Pancreas (tissue), 10 donors: ENCODE measurements at regions of chr11 and their contacts with region 1.

Region 1: DNA sequence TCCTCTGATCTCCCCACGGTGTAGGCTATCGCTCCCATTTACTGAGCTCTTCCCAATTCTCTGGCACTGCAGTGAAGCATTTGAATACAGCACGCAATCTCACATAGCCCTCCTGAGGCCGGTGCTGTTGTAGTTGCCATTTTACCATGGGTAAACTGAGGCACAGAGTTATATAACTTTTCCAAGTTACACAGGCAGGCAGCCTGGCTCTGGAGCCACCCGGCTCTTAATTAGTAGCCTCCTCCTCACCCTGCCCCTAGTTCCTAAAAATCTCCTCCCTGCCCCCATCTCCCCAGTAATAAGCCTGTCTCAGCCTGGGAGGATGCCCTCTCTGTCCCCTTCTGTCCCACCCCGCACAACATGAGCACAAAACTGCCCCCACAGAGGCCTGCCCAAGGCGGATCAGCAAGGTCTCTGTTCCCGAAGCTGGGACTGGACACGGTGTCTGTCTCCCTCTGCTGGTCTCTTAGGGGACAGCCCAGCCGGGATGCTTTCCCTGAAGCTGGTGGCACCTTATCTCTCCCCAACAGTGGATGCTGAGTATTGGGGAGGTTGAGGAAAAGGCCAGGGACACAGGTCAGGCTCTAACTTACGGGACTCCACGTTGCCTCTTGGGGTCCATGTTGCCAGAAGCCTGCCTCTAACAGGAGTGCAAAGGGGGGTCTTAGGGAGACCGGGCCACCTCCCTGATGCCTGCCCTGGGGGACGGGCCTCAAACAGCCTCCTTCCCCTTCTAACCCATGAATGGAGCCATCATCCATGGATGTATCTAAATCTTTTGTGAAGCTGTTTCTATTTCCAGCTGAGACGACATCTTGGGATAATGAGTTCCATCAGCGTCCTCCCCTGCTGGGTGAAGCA is 9.1 kb upstream of the CLCF1 start:
- DNase-seq: peak; percentile 66 to 91 (median 84)
- ATAC-seq: peak; percentile 75 to 95 (median 92)
- H3K4me3 ChIP-seq: no peak overlapping the region
- H3K27ac ChIP-seq: no peak overlapping the region
- H3K4me1 ChIP-seq: no peaks in the 10 kb centered on the region
- H3K27me3 ChIP-seq: no peaks in the 10 kb centered on the region
- CTCF ChIP-seq: peak; percentile 89 to 96 (median 91)

Region 2: DNA sequence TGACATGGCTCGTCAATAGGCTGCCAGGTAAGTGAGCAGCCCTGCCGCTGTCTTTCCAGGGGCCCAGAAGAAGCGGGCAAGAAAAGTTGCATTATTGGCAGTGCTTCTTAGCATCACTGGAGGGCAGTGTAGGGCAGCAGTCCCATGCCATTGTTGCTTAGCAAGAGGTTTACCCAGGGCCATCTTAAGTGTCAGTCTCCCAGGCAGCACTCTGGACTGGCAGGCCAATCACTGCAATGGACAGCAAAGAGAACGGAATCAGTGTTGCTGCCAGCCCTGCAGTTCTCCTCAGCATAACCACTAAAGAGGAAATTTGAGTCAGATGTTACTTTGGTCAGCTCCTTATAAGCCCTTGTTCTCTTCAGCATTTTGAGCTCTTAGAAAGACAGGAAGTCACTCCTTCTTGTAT is 129.7 kb before region 1 on chr11:
- intact Hi-C with region 1: loop called in 1 of 3 experiments (anchors 10 kb)
- DNase-seq: peak in 2 of 6 donors; percentile 16 to 36
- ATAC-seq: peak in 3 of 4 donors; percentile 56 to 81 (median 63)
- H3K4me3 ChIP-seq: no peak overlapping the region
- H3K27ac ChIP-seq: no peak overlapping the region
- H3K4me1 ChIP-seq: no peaks in the 10 kb centered on the region
- H3K27me3 ChIP-seq: no peaks in the 10 kb centered on the region
- CTCF ChIP-seq: no peak

Region 3: DNA sequence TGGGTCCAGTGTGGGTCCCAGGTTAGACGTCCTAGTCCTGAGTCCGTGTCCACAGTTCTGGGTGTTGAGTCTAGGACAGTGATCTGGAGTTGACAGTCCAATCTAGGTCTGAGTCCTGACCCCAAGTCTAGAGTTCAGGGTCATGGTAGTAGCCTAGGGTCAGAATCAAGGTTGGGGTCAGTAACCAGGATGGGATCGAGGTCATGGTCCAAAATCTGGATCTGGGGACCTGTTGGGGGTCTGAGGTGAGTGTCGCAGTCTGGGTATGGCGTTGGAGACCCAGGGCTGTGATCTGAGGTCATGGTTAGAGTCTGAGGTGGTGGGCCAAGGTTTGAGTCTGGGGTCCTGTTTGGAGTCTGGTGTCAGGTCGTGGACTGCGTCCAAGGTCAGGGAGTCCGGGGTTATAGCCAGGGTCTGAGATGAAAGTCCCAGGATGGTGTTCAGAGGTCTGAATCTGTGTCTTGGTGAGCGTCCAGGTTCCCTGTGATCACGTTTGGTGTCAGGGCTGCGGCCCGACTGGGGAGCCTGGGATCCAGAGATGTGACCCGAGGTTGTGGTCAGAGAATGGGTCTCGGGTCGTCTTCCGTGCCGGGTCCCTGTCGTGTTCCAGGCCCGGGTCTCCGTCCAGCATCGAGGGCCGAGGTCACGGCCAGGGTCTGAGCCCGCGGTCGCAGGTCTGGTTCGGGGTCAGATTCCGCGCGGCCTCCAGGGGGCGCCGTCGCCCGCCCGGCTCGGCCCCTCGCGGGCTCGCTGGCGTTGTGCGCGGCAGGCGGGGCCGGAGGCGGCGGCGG is 116.7 kb before region 1 on chr11:
- intact Hi-C with region 1: loop called in 1 of 3 experiments (anchors 5 kb)
- DNase-seq: peak; percentile 66 to 96 (median 84)
- ATAC-seq: peak; percentile 69 to 78 (median 74)
- H3K4me3 ChIP-seq: peak overlapping the region in 2 of 4 donors; percentile 28 to 92
- H3K27ac ChIP-seq: peak overlapping the region in 3 of 4 donors; percentile 18 to 67 (median 42)
- H3K4me1 ChIP-seq: peaks cover 21 to 30% (median 29%) of the 10 kb centered on the region in 3 donors
- H3K27me3 ChIP-seq: no peaks in the 10 kb centered on the region
- CTCF ChIP-seq: peak; percentile 56 to 77 (median 68)

Region 4: DNA sequence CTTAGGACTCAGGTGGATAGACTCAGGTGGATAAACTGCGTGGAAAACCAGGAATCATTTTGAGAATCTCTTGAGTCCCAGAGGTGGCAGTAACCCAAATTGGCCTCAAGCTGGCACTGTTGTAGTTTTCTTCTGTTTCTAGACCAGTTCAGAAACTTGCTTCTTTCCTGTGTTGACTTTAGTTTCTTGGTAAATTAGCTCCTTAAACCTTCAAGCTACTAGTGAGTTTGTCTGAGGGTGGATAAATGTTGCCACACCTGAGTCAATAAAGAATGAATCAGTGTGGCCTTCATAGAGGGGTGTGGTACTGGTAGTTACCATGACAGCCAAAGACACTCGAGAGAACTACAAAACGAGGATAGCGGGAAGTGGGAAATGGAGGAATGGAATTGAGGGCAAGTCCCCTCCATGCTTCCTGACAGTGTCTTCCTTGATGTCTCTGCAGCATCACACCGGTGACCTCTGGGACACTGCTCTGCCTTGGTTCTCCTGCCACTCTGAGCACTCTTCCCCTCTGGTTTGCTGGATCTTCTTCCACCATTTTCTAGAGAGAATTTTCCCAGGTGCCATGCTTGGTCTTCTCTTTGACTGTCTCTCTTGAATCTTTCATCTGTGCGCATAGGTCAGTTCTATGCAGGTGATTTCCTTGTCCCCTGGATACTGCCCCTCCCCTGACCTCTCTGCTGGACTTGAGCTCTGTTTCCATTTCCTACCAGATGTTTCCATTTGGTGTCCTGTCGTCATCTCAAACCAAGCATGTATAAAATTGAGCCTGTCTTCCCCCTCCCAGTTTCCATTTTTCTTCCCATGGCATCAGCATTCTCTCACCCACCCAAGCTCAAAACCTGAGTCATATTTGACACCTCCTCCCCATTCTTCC is 36.3 kb before region 1 on chr11:
- intact Hi-C with region 1: loop called in 1 of 3 experiments (anchors 5 kb)
- DNase-seq: peak in 3 of 6 donors; percentile 55 to 70 (median 67)
- ATAC-seq: peak; percentile 79 to 87 (median 86)
- H3K4me3 ChIP-seq: no peak overlapping the region
- H3K27ac ChIP-seq: peak overlapping the region; percentile 51 to 74 (median 70)
- H3K4me1 ChIP-seq: peaks cover 19 to 32% (median 22%) of the 10 kb centered on the region in 3 donors
- H3K27me3 ChIP-seq: no peaks in the 10 kb centered on the region
- CTCF ChIP-seq: peak; percentile 28 to 52 (median 47)